T-cell (primary cell): ENCODE measurements at regions of chr7 and their contacts with region 1.

Region 1: DNA sequence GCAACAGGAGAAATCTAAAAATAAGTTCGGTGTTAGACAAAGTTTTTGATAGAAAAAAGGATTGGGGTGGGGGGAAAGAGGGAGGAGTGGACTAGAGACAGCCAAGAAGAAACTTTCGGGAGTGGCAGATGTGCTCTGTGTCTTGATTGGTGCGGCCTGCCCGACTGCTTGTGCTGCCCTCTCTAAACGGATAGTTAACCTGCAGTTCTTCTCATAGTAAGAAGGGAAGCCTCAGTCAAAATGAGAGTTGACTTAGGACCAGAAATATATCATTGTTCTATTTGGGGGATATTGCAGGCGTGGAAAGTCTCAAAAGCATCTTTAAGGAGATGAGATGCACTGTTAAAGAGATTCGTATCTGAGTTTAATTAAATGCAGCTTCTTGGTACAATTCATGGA is 39.3 kb downstream of the UBE3C start:
- DNase-seq: no peak
- ATAC-seq: no peak
- H3K4me3 ChIP-seq: no peak overlapping the region
- H3K4me3 Mint-ChIP-seq: no peak overlapping the region
- H3K27ac ChIP-seq: no peak overlapping the region
- H3K27ac Mint-ChIP-seq: no peak overlapping the region
- H3K4me1 ChIP-seq: no peaks in the 10 kb centered on the region
- H3K4me1 Mint-ChIP-seq: no peaks in the 10 kb centered on the region
- H3K27me3 ChIP-seq: no peaks in the 10 kb centered on the region
- H3K27me3 Mint-ChIP-seq: no peaks in the 10 kb centered on the region

Region 2: GRCh38 chr7:157158400-157158799 is 19.6 kb before region 1 on chr7:
- CTCF ChIA-PET with region 1: interaction called in 1 of 2 experiments, 4 read pairs
- POLR2A ChIA-PET with region 1: interaction called in 1 of 2 experiments, 14 read pairs
- DNase-seq: no peak
- ATAC-seq: no peak
- H3K4me3 ChIP-seq: no peak overlapping the region
- H3K4me3 Mint-ChIP-seq: no peak overlapping the region
- H3K27ac ChIP-seq: no peak overlapping the region
- H3K27ac Mint-ChIP-seq: no peak overlapping the region
- H3K4me1 ChIP-seq: peaks cover 0 to 4% of the 10 kb centered on the region in 2 experiments
- H3K4me1 Mint-ChIP-seq: peaks cover 35 to 66% (median 55%) of the 10 kb centered on the region in 3 donors
- H3K27me3 ChIP-seq: no peaks in the 10 kb centered on the region
- H3K27me3 Mint-ChIP-seq: no peaks in the 10 kb centered on the region

Region 3: GRCh38 chr7:157193274-157193673 is 15.3 kb after region 1 on chr7:
- CTCF ChIA-PET with region 1: no interaction called
- POLR2A ChIA-PET with region 1: no interaction called
- DNase-seq: no peak
- ATAC-seq: no peak
- H3K4me3 ChIP-seq: no peak overlapping the region
- H3K4me3 Mint-ChIP-seq: no peak overlapping the region
- H3K27ac ChIP-seq: no peak overlapping the region
- H3K27ac Mint-ChIP-seq: no peak overlapping the region
- H3K4me1 ChIP-seq: no peaks in the 10 kb centered on the region
- H3K4me1 Mint-ChIP-seq: no peaks in the 10 kb centered on the region
- H3K27me3 ChIP-seq: no peaks in the 10 kb centered on the region
- H3K27me3 Mint-ChIP-seq: no peaks in the 10 kb centered on the region

Region 4: GRCh38 chr7:157250605-157251228 is 72.7 kb after region 1 on chr7:
- CTCF ChIA-PET with region 1: interaction called in 1 of 2 experiments, 12 read pairs
- POLR2A ChIA-PET with region 1: no interaction called
- DNase-seq: peak in 31 of 35 experiments; percentile 13 to 73 (median 33)
- ATAC-seq: peak; percentile 46 to 67 (median 60)
- H3K4me3 ChIP-seq: no peak overlapping the region
- H3K4me3 Mint-ChIP-seq: no peak overlapping the region
- H3K27ac ChIP-seq: no peak overlapping the region
- H3K27ac Mint-ChIP-seq: no peak overlapping the region
- H3K4me1 ChIP-seq: no peaks in the 10 kb centered on the region
- H3K4me1 Mint-ChIP-seq: peaks cover 0 to 4% (median 0%) of the 10 kb centered on the region in 3 donors
- H3K27me3 ChIP-seq: no peaks in the 10 kb centered on the region
- H3K27me3 Mint-ChIP-seq: no peaks in the 10 kb centered on the region

Region 5: DNA sequence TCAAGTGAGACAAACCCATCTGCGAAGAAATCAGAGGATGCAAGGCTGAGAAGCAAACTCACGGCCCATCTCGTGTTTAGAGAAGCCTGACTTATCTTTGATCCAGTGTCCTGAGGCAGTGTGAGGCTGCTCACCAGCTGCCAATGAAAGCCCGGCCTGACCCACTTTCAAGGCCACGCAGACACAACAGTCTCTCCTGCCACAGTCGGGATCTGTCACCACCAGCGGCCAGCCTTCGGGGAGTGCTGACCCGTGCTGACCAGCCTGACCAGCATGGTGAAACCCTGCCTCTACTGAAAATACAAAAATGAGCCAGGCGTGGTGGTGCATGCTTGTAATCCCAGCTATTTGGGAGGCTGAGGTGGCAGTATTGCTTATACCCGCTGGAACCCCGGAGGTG is 151.5 kb after region 1 on chr7:
- CTCF ChIA-PET with region 1: no interaction called
- POLR2A ChIA-PET with region 1: no interaction called
- DNase-seq: no peak
- ATAC-seq: no peak
- H3K4me3 ChIP-seq: no peak overlapping the region
- H3K4me3 Mint-ChIP-seq: no peak overlapping the region
- H3K27ac ChIP-seq: no peak overlapping the region
- H3K27ac Mint-ChIP-seq: no peak overlapping the region
- H3K4me1 ChIP-seq: no peaks in the 10 kb centered on the region
- H3K4me1 Mint-ChIP-seq: no peaks in the 10 kb centered on the region
- H3K27me3 ChIP-seq: peaks cover 0 to 23% of the 10 kb centered on the region in 2 experiments
- H3K27me3 Mint-ChIP-seq: peaks cover 6 to 9% of the 10 kb centered on the region in 2 donors